Sigmoid colon (tissue), 7 donors: ENCODE measurements at regions of chr20 and their contacts with region 1.

Region 1: DNA sequence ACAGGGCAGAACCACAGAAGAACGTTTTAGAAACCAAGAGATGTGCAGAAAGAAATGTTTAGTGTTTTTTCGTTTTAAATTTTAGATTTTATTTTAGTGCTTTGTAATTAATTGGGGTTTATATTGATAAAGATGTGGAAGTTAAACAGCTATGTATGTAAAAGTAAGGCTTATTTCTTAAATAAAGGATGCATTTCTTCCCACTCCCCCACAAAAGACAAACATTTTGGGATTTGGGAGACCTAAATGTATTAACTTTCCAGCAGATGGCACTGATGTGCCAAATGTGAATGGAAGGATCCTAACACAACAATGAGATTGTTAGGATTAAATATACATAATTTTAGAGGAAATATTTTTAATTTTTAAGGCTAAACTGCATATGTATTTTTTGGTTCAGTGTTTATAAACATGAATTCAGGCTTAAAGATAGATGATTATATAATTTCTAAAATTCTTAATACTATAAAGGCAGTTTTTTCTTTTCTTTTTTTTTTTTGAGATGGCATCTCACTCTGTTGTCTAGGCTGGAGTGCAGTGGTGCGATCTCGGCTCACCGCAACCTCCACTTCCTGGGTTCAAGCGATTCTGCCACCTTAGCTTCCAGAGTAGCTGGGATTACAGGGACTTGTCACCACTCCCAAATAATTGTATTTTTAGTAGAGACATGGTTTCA is 12.0 kb downstream of the PFDN4 start:
- DNase-seq: no peak
- H3K4me3 ChIP-seq: no peak overlapping the region
- H3K27ac ChIP-seq: no peak overlapping the region
- H3K4me1 ChIP-seq: peaks cover 0 to 4% (median 0%) of the 10 kb centered on the region in 4 donors
- H3K27me3 ChIP-seq: no peaks in the 10 kb centered on the region
- CTCF ChIP-seq: peak in 1 of 4 experiments; percentile 35
- EP300 ChIP-seq: no peak
- POLR2A ChIP-seq: no peak

Region 2: GRCh38 chr20:54107600-54108416 is 112.1 kb before region 1 on chr20:
- intact Hi-C with region 1: no loop called
- DNase-seq: no peak
- H3K4me3 ChIP-seq: no peak overlapping the region
- H3K27ac ChIP-seq: no peak overlapping the region
- H3K4me1 ChIP-seq: no peaks in the 10 kb centered on the region
- H3K27me3 ChIP-seq: no peaks in the 10 kb centered on the region
- CTCF ChIP-seq: peak in 1 of 4 experiments; percentile 9
- EP300 ChIP-seq: no peak
- POLR2A ChIP-seq: no peak

Region 3: GRCh38 chr20:54199721-54200176 is 20.1 kb before region 1 on chr20:
- intact Hi-C with region 1: no loop called
- DNase-seq: peak; percentile 78
- H3K4me3 ChIP-seq: no peak overlapping the region
- H3K27ac ChIP-seq: no peak overlapping the region
- H3K4me1 ChIP-seq: no peaks in the 10 kb centered on the region
- H3K27me3 ChIP-seq: no peaks in the 10 kb centered on the region
- CTCF ChIP-seq: peak; percentile 54 to 84 (median 71)
- EP300 ChIP-seq: no peak
- POLR2A ChIP-seq: no peak

Region 4: GRCh38 chr20:54355641-54356280 is 135.9 kb after region 1 on chr20:
- intact Hi-C with region 1: no loop called
- DNase-seq: no peak
- H3K4me3 ChIP-seq: no peak overlapping the region
- H3K27ac ChIP-seq: no peak overlapping the region
- H3K4me1 ChIP-seq: peaks cover 0 to 12% (median 0%) of the 10 kb centered on the region in 4 donors
- H3K27me3 ChIP-seq: no peaks in the 10 kb centered on the region
- CTCF ChIP-seq: no peak
- EP300 ChIP-seq: no peak
- POLR2A ChIP-seq: no peak

Region 5: DNA sequence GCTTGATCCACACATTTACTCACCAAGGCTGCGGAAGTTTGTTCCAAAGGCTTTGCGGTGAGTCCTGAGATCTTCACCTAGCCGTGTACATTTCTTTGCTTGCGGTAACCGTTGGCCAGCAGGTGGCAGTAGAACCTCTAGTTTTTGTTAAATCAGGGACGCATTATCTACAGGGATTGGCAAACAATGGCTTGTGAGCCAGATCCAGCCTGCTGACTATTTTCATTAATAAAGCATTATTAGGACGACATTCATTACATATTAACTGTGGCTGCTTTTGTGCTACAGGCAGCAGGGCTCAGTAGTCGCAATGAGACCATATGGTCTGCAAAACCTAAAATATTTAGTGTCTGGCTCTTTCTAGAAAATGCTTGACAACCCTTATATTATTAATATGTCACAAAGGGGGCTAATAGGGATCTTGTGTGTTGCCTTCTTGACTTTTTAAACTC is 429.6 kb after region 1 on chr20:
- intact Hi-C with region 1: loop called (anchors 2 kb)
- DNase-seq: peak; percentile 81
- H3K4me3 ChIP-seq: no peak overlapping the region
- H3K27ac ChIP-seq: no peak overlapping the region
- H3K4me1 ChIP-seq: no peaks in the 10 kb centered on the region
- H3K27me3 ChIP-seq: no peaks in the 10 kb centered on the region
- CTCF ChIP-seq: peak; percentile 35 to 83 (median 49)
- EP300 ChIP-seq: no peak
- POLR2A ChIP-seq: no peak